ENCODE measurements at regions of chr7 and their contacts with region 1.

Region 1: GRCh38 chr7:114865564-114865963 is 56.3 kb upstream of the MDFIC start:
- DNase-seq: peak; percentile 64
- ATAC-seq: peak; percentile 88
- H3K4me3 ChIP-seq: no peak overlapping the region
- H3K27ac ChIP-seq: no peak overlapping the region
- H3K4me1 ChIP-seq: no peaks in the 10 kb centered on the region
- H3K27me3 ChIP-seq: no peaks in the 10 kb centered on the region
- CTCF ChIP-seq: peak; percentile 82
- POLR2A ChIP-seq: no peak
- RAD21 ChIP-seq: peak; percentile 96

Region 2: DNA sequence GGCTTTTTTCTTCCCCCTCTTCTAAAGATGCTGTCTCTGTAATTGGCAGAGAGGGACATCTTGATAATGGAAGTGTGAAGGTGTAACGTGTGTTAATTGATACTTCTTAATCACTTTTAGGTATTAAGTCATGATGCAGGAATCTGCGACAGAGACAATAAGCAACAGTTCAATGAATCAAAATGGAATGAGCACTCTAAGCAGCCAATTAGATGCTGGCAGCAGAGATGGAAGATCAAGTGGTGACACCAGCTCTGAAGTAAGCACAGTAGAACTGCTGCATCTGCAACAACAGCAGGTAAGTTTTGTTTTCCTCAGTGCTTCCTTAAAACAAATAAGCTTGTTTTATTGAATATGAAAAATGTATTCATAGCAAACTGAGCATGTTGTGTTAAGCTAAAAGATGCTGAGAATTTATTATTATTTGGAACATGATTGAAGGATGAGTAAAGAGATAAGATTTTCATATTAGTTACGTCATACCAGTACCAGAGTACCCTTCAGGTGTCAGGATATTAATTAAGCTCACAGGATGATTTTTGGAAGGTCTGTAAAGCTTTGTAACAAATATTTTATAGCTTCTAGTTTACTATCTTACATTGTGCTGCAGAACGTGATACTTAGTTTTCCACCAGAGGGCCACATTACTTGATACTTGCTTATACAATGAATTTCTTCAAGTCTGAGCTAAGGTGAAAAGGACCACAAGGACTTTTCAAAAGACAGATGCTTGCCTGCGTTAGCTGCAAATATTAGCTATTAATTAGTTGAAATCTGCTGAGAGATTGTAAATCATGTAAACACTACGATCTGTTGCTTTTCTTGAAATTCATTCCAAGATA is 439.0 kb before region 1 on chr7:
- CTCF ChIA-PET with region 1: no interaction called
- POLR2A ChIA-PET with region 1: no interaction called
- dilution Hi-C with region 1: no loop called
- in situ Hi-C with region 1: no loop called
- intact Hi-C with region 1: loop called (anchors 5 kb)
- DNase-seq: peak; percentile 36
- ATAC-seq: peak; percentile 53; the same call in 1 of the 2 replicates
- H3K4me3 ChIP-seq: no peak overlapping the region
- H3K27ac ChIP-seq: no peak overlapping the region
- H3K4me1 ChIP-seq: no peaks in the 10 kb centered on the region
- H3K27me3 ChIP-seq: no peaks in the 10 kb centered on the region
- CTCF ChIP-seq: peak; percentile 43
- POLR2A ChIP-seq: no peak
- RAD21 ChIP-seq: peak; percentile 35; the same call in 1 of the 2 replicates

Region 3: GRCh38 chr7:115356139-115356746 is 490.7 kb after region 1 on chr7:
- CTCF ChIA-PET with region 1: no interaction called
- POLR2A ChIA-PET with region 1: no interaction called
- dilution Hi-C with region 1: no loop called
- in situ Hi-C with region 1: no loop called
- intact Hi-C with region 1: loop called (anchors 5 kb)
- DNase-seq: peak; percentile 44
- ATAC-seq: no peak
- H3K4me3 ChIP-seq: no peak overlapping the region
- H3K27ac ChIP-seq: no peak overlapping the region
- H3K4me1 ChIP-seq: peaks cover 4% of the 10 kb centered on the region; the same call in 1 of the 2 replicates
- H3K27me3 ChIP-seq: no peaks in the 10 kb centered on the region
- CTCF ChIP-seq: peak; percentile 48
- POLR2A ChIP-seq: no peak
- RAD21 ChIP-seq: peak; percentile 42

Region 4: GRCh38 chr7:115572111-115572510 is 706.5 kb after region 1 on chr7:
- CTCF ChIA-PET with region 1: no interaction called
- POLR2A ChIA-PET with region 1: no interaction called
- dilution Hi-C with region 1: no loop called
- in situ Hi-C with region 1: no loop called
- intact Hi-C with region 1: no loop called
- DNase-seq: no peak
- ATAC-seq: no peak
- H3K4me3 ChIP-seq: no peak overlapping the region
- H3K27ac ChIP-seq: no peak overlapping the region
- H3K4me1 ChIP-seq: no peaks in the 10 kb centered on the region
- H3K27me3 ChIP-seq: no peaks in the 10 kb centered on the region
- CTCF ChIP-seq: no peak
- POLR2A ChIP-seq: no peak
- RAD21 ChIP-seq: no peak

Region 5: DNA sequence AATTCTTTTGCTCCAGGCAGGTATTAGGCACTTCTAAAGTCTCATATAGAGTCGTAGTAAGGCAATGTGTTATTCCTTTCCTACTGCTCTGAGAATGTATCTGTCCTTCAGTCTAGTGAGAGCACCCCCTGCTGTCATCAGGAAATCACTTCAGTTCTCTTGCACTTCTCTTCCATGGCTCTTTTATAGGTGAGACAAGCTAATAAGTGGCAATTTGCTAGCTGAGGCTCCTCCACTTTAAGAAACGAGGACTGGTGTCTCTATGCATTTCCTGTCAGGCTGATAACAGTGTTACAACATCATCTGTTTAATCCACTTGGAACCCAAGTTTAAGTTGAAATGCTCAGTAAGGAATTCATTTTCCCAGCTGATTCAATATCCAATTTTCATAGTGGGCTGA is 814.4 kb after region 1 on chr7:
- CTCF ChIA-PET with region 1: interaction called, 4 read pairs
- POLR2A ChIA-PET with region 1: no interaction called
- dilution Hi-C with region 1: no loop called
- in situ Hi-C with region 1: loop called (anchors 25 kb)
- intact Hi-C with region 1: loop called (anchors 1 kb)
- DNase-seq: peak; percentile 59
- ATAC-seq: peak; percentile 61; the same call in 1 of the 2 replicates
- H3K4me3 ChIP-seq: no peak overlapping the region
- H3K27ac ChIP-seq: no peak overlapping the region
- H3K4me1 ChIP-seq: no peaks in the 10 kb centered on the region
- H3K27me3 ChIP-seq: no peaks in the 10 kb centered on the region
- CTCF ChIP-seq: peak; percentile 53
- POLR2A ChIP-seq: no peak
- RAD21 ChIP-seq: peak; percentile 58

Region 6: GRCh38 chr7:115851291-115851690 is 985.7 kb after region 1 on chr7:
- CTCF ChIA-PET with region 1: interaction called, 10 read pairs
- POLR2A ChIA-PET with region 1: no interaction called
- dilution Hi-C with region 1: no loop called
- in situ Hi-C with region 1: loop called (anchors 25 kb)
- intact Hi-C with region 1: loop called (anchors 1 kb)
- DNase-seq: peak; percentile 73
- ATAC-seq: peak; percentile 59; the same call in 1 of the 2 replicates
- H3K4me3 ChIP-seq: no peak overlapping the region
- H3K27ac ChIP-seq: no peak overlapping the region
- H3K4me1 ChIP-seq: no peaks in the 10 kb centered on the region
- H3K27me3 ChIP-seq: no peaks in the 10 kb centered on the region
- CTCF ChIP-seq: peak; percentile 65
- POLR2A ChIP-seq: no peak
- RAD21 ChIP-seq: peak; percentile 79

Region 7: GRCh38 chr7:116122972-116123595 is 1257.5 kb after region 1 on chr7:
- CTCF ChIA-PET with region 1: no interaction called
- POLR2A ChIA-PET with region 1: no interaction called
- dilution Hi-C with region 1: no loop called
- in situ Hi-C with region 1: loop called (anchors 10 kb)
- intact Hi-C with region 1: no loop called
- DNase-seq: peak; percentile 66
- ATAC-seq: peak; percentile 53; the same call in 1 of the 2 replicates
- H3K4me3 ChIP-seq: no peak overlapping the region
- H3K27ac ChIP-seq: no peak overlapping the region
- H3K4me1 ChIP-seq: peaks cover 3% of the 10 kb centered on the region
- H3K27me3 ChIP-seq: no peaks in the 10 kb centered on the region
- CTCF ChIP-seq: peak; percentile 81
- POLR2A ChIP-seq: no peak
- RAD21 ChIP-seq: peak; percentile 69